ENCODE measurements at regions of chr11 and their contacts with region 1.

Region 1: GRCh38 chr11:130069684-130070108 is at the start of gene APLP2:
- DNase-seq: peak; percentile 99 to 100
- ATAC-seq: peak; percentile 97
- H3K4me3 ChIP-seq: peak within 1 kb of the TSS; percentile 90 to 100
- H3K27ac ChIP-seq: peak within 1 kb of the TSS; percentile 80 to 100
- H3K4me1 ChIP-seq: peaks cover 0 to 2% of the 10 kb centered on the region in 2 donors
- H3K27me3 ChIP-seq: no peaks in the 10 kb centered on the region
- total RNA-seq, gene APLP2: 367 to 414 TPM

Region 2: GRCh38 chr11:129922674-129923073 is 147.0 kb before region 1 on chr11:
- intact Hi-C with region 1: loop called in 1 of 2 experiments (anchors 10 kb)
- DNase-seq: no peak
- ATAC-seq: no peak
- H3K4me3 ChIP-seq: no peak overlapping the region
- H3K27ac ChIP-seq: no peak overlapping the region
- H3K4me1 ChIP-seq: no peaks in the 10 kb centered on the region
- H3K27me3 ChIP-seq: no peaks in the 10 kb centered on the region

Region 3: GRCh38 chr11:130124096-130124495 is 54.4 kb after region 1 on chr11:
- intact Hi-C with region 1: loop called in 1 of 2 experiments (anchors 5 kb)
- DNase-seq: peak; percentile 83 to 90
- ATAC-seq: peak; percentile 92
- H3K4me3 ChIP-seq: no peak overlapping the region
- H3K27ac ChIP-seq: peak overlapping the region in 1 of 2 donors; percentile 66
- H3K4me1 ChIP-seq: peaks cover 0 to 1% of the 10 kb centered on the region in 2 donors
- H3K27me3 ChIP-seq: no peaks in the 10 kb centered on the region

Region 4: DNA sequence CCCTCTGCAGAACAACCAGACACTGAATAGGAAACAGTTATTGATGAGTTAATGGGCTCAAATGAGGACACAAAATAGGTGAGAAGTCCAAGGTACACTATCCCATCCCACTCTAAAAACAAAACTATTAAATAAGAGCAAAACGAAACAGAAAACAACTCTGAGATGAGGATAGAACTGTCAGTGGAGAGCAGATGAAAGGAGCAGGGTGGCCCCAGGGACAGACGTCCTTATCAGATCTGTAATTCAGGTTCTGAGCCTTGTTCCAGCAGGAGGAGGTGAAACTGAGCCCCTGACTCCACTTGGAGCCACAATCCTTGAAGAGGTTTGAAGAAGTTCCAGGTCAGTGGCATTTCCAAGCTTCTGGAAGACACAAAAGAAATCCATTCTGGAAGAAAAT is 855.1 kb after region 1 on chr11:
- intact Hi-C with region 1: no loop called
- DNase-seq: no peak
- ATAC-seq: no peak
- H3K4me3 ChIP-seq: no peak overlapping the region
- H3K27ac ChIP-seq: no peak overlapping the region
- H3K4me1 ChIP-seq: no peaks in the 10 kb centered on the region
- H3K27me3 ChIP-seq: no peaks in the 10 kb centered on the region